ENCODE measurements at regions of chr13 and their contacts with region 1.

Region 1: DNA sequence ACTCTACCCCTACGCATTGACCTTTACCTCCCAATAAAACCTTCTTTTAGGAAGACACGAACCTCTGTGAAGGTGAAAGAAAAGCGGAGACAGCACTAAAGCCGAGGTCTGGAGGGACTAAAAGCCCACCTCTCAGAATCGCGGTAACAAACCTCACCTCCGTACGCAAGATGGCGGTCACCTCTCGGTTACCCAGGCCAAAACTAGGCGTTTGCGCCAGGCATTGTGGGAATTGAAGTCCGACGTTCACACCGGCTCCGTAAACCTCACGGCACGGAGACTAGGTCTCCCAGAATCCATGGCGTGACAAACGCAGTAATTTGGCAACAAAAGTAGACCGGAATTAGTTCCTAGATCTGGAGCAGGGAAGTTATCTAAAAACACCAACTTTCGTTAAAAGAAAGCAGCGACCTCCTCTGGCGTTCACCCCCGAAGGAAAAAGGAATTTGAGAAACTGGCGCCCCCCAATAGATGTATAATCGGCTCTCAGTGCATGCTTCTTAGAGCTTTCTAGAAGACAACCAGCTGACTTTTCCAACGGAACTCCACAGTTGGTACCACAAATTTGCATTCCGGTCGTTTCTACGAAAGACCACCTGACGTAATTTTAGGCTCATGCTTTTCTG is at the start of gene N4BP2L2:
- DNase-seq: peak; percentile 83
- ATAC-seq: peak; percentile 99
- H3K4me3 ChIP-seq: peak within 1 kb of the TSS; percentile 68 to 87
- H3K27ac ChIP-seq: peak within 1 kb of the TSS; percentile 98
- H3K4me1 ChIP-seq: peaks cover 3% of the 10 kb centered on the region; the same call in 1 of the 2 replicates
- H3K27me3 ChIP-seq: no peaks in the 10 kb centered on the region
- CTCF ChIP-seq: peak; percentile 23; the same call in 1 of the 2 replicates
- total RNA-seq, gene N4BP2L2: 43.8 TPM

Region 2: GRCh38 chr13:32153056-32153455 is 385.7 kb before region 1 on chr13:
- CTCF ChIA-PET with region 1: interaction called, 13 read pairs
- POLR2A ChIA-PET with region 1: no interaction called
- in situ Hi-C with region 1: no loop called
- intact Hi-C with region 1: no loop called
- DNase-seq: no peak
- ATAC-seq: no peak
- H3K4me3 ChIP-seq: no peak overlapping the region
- H3K27ac ChIP-seq: no peak overlapping the region
- H3K4me1 ChIP-seq: no peaks in the 10 kb centered on the region
- H3K27me3 ChIP-seq: no peaks in the 10 kb centered on the region
- CTCF ChIP-seq: no peak

Region 3: GRCh38 chr13:32237681-32238080 is 301.1 kb before region 1 on chr13:
- CTCF ChIA-PET with region 1: no interaction called
- POLR2A ChIA-PET with region 1: no interaction called
- in situ Hi-C with region 1: no loop called
- intact Hi-C with region 1: no loop called
- DNase-seq: no peak
- ATAC-seq: no peak
- H3K4me3 ChIP-seq: no peak overlapping the region
- H3K27ac ChIP-seq: no peak overlapping the region
- H3K4me1 ChIP-seq: no peaks in the 10 kb centered on the region
- H3K27me3 ChIP-seq: no peaks in the 10 kb centered on the region
- CTCF ChIP-seq: no peak